Mammary epithelial cell (primary cell): ENCODE measurements at regions of chr13 and their contacts with region 1.

Region 1: DNA sequence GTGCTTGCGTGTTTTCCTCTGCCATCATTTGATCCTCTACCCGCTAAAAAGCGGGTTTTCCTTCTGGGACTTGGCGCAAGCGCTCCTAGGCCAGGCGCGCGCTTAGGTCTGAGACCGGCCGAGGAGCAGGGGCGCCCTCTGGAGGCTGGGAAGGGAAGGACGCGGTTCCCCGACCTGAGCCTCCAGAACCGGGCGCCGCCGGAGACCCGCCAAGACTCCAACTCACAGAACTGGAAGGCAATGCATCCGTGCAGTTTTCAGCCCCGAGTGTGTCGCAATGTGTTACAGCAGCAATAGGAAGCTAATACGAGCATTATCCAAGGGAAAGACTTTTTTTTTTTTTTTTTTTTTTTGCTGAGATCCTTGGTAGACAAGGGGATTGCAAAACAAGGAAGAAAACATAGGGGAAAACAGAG is 190.9 kb downstream of the COL4A1 start:
- DNase-seq: no peak
- H3K4me3 ChIP-seq: no peak overlapping the region
- H3K27ac ChIP-seq: no peak overlapping the region
- H3K4me1 ChIP-seq: peaks cover 34% of the 10 kb centered on the region
- H3K27me3 ChIP-seq: no peaks in the 10 kb centered on the region
- CTCF ChIP-seq: peak; percentile 26 to 60

Region 2: DNA sequence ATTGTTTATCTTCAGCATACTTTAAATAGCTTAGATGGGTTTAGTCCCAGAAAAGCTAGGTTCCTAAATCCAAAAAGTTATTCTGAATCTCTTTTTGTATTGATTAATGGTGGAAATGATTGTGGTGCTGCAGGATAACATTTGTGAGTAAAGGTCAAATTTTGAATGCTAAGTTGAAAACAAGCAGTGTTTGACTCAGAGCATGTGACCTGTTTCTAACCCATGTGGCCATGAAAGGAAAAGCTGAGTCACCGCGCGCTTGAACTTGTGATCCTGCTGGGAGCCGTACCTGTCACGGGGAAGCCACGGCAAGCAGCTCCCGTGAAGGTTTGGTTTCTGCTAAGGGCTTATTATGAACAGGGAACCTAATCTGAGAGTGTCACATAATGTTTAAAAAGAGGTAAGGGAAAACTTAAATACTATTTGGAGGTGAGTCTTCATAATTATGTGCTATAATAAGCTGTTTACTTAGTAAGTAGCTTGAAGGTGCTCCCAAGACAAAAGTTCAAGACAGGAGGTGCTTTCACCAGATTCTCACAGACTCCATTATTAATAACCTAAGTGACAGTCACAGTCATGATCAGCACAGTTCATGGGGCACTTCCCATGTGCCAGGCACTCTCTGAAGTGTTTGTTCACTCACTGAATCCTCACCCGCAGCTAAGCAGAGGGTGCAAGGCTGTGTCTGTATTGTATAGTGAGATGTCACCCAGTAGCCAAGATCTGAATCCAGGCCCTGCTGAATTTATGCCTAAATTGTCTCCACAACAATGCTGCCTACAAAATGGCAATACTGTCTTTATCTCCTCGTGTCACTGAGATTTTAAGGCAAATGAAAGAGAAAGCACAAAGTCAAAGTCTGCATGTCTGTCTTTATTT is 1200.2 kb before region 1 on chr13:
- CTCF ChIA-PET with region 1: no interaction called
- dilution Hi-C with region 1: no loop called
- in situ Hi-C with region 1: no loop called
- intact Hi-C with region 1: loop called (anchors 2 kb)
- DNase-seq: peak; percentile 94
- H3K4me3 ChIP-seq: no peak overlapping the region
- H3K27ac ChIP-seq: peak overlapping the region; percentile 50
- H3K4me1 ChIP-seq: peaks cover 25% of the 10 kb centered on the region
- H3K27me3 ChIP-seq: no peaks in the 10 kb centered on the region
- CTCF ChIP-seq: no peak

Region 3: DNA sequence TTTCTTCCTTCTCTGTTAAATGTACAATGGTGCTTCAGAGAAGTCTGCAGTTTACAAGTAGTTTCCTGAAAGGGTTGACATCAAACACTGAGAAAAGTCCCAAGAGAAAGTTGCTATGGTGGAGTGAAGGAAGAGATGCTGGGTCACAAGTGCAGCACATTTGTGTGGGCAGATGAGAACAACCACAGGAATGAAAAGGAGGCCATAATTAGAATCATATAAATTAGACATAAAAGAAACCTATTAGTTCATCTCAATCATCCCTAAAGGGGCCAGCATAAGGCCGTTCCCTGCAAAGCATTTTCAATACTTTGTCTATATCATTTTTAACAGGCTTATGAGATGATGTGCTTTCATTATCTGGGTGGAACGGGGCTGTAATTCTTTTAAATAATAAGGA is 688.9 kb before region 1 on chr13:
- CTCF ChIA-PET with region 1: no interaction called
- dilution Hi-C with region 1: no loop called
- in situ Hi-C with region 1: loop called in 1 of 2 experiments (anchors 25 kb)
- intact Hi-C with region 1: no loop called
- DNase-seq: peak; percentile 19
- H3K4me3 ChIP-seq: no peak overlapping the region
- H3K27ac ChIP-seq: no peak overlapping the region
- H3K4me1 ChIP-seq: peaks cover 8% of the 10 kb centered on the region
- H3K27me3 ChIP-seq: no peaks in the 10 kb centered on the region
- CTCF ChIP-seq: no peak

Region 4: GRCh38 chr13:109610517-109610916 is 505.6 kb before region 1 on chr13:
- CTCF ChIA-PET with region 1: no interaction called
- dilution Hi-C with region 1: no loop called
- in situ Hi-C with region 1: loop called in 1 of 2 experiments (anchors 25 kb)
- intact Hi-C with region 1: loop called (anchors 5 kb)
- DNase-seq: no peak
- H3K4me3 ChIP-seq: no peak overlapping the region
- H3K27ac ChIP-seq: no peak overlapping the region
- H3K4me1 ChIP-seq: no peaks in the 10 kb centered on the region
- H3K27me3 ChIP-seq: no peaks in the 10 kb centered on the region
- CTCF ChIP-seq: peak; percentile 22 to 51

Region 5: GRCh38 chr13:109778102-109778542 is 338.0 kb before region 1 on chr13:
- CTCF ChIA-PET with region 1: no interaction called
- dilution Hi-C with region 1: no loop called
- in situ Hi-C with region 1: loop called in 1 of 2 experiments (anchors 10 kb)
- intact Hi-C with region 1: no loop called
- DNase-seq: peak; percentile 59
- H3K4me3 ChIP-seq: peak overlapping the region in 2 of 3 experiments; percentile 56 to 58
- H3K27ac ChIP-seq: peak overlapping the region; percentile 22
- H3K4me1 ChIP-seq: peaks cover 46% of the 10 kb centered on the region
- H3K27me3 ChIP-seq: no peaks in the 10 kb centered on the region
- CTCF ChIP-seq: no peak

Region 6: DNA sequence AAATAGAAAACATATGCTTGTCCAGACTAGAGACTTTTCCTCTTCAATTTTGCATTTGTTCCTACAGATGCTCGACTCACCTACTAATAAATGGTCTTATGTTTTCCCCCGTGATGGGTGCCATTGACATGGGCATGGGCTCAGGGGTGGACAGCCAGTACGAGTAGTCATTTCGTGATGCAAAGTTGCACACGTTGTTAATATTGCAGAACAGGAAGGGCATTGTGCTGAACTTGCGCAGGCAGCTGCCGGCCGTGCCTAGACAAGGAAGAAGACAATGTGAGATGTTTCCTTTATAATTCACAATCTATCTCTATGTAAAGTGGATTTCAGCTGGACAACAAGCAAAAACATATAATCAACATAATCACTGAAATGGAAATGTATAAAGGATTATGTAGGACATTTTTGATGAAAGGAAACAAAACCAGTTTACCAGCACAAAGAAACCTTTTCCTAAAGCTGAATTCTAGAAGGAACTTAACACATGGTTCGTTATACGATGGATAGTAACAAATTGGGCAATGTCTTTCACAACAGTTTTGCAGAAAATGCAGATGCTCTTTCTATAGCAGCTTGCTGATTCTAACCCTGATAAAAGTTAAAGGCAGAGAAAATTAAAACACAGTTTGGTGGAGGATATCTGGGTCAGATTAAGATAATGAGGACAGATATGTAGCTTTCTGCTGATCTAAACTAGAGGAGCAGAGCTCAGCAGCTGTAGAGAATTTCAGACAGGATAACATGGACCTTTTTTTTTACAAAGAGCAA is 45.2 kb after region 1 on chr13:
- CTCF ChIA-PET with region 1: no interaction called
- dilution Hi-C with region 1: no loop called
- in situ Hi-C with region 1: no loop called
- intact Hi-C with region 1: no loop called
- DNase-seq: no peak
- H3K4me3 ChIP-seq: no peak overlapping the region
- H3K27ac ChIP-seq: no peak overlapping the region
- H3K4me1 ChIP-seq: no peaks in the 10 kb centered on the region
- H3K27me3 ChIP-seq: no peaks in the 10 kb centered on the region
- CTCF ChIP-seq: no peak